Gastrocnemius medialis (tissue), 4 donors: ENCODE measurements at regions of chr11 and their contacts with region 1.

Region 1: DNA sequence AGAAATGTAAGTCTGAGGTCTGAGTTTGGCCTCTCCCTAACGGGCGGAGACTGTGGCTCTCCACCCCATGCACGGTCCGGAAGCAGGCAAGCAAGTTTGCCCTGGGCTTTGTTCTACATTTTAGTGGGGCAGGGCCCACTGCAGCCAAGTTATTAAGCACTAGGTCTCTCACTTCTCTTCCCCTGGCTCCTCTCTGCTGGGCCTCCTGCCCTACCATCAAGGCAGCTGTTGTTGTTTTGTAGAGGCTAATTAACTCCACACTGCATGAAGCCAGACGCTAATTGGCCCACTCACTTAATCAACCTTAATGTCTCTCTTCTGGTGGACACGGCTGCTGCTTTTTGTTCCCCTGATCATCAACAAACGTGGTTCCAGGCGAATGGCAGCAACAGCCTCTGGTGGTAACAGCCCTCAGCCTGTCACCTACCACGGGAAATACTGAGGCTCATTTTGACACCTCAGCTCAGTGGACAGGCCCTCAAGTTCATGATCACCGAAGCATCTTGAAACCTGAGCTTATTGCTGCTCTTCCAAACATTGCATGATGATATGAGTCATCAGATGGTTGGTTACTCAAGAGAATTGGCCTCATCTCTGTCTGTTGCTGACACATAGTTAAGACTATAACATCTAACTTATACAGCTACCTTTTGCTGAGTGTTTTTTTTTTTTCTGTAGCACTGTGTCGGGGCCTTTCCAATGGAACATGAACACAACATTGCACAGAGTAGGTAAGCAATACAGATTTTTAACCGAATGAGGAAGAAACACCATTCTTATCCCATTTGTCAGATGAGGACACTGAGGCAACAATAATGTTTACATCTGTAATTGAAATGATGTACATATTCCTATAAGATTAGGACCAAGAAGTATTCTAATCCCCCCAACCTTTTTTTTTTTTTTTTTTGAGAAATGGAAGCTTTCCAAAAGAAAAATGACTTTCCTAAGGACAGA is 20.8 kb upstream of the LMO2 start:
- DNase-seq: peak; percentile 53 to 71
- ATAC-seq: peak; percentile 100
- H3K4me3 ChIP-seq: no peak overlapping the region
- H3K27ac ChIP-seq: peak overlapping the region; percentile 44 to 78 (median 76)
- H3K4me1 ChIP-seq: peaks cover 0 to 13% of the 10 kb centered on the region in 2 donors
- H3K27me3 ChIP-seq: no peaks in the 10 kb centered on the region
- CTCF ChIP-seq: no peak
- POLR2A ChIP-seq: no peak

Region 2: DNA sequence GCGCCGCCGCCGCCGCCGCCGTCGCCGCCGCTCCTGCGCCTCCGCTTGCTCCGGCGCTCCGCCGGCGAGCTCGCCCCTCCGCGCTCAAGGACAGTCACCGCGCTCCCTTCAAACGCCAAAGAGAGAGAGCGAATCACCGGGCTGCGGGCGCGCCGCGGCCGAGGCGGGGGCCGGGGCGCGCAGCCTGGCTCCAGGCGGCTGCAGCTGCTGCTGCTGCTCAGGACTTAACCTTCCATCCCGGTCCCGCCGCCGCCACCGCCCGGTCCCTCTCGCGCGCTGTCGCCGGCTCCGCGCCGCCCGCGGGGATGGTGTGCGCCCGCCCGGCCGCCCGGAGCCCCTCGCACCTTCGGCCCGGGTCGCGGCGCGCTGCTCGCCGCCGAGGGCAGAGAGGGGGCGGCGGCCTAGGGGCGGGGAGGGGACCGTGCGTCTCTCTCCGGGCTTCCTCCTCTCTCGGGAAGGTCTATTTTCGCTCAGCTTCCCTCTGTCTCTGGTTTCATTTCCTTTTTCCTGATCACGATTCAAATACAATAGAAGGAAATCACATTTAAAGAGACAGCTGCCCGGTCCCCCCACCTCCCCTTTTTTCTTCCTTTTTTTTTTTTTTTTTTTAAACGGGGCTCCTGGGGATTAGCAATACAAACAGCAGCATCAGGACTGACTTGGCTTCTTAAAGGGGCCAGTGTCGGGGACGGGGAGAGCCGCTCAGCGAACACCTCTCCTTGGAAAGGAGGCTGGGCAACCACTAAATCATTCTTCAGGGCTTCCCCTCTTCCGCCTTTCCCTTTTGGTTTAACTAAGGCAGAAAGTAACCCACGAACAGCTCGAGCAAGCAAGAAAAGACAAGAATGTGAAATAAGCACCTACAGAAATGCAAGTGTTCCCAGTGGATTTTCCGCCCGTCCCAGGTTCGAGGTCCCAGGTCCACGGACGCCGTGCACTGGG is 42.9 kb before region 1 on chr11:
- in situ Hi-C with region 1: loop called in 1 of 4 experiments (anchors 10 kb)
- intact Hi-C with region 1: loop called (anchors 2 kb)
- DNase-seq: peak; percentile 31 to 72
- ATAC-seq: peak; percentile 84 to 86
- H3K4me3 ChIP-seq: peak overlapping the region; percentile 66 to 85 (median 76)
- H3K27ac ChIP-seq: peak overlapping the region; percentile 52 to 82 (median 74)
- H3K4me1 ChIP-seq: peaks cover 10 to 12% of the 10 kb centered on the region in 2 donors
- H3K27me3 ChIP-seq: no peaks in the 10 kb centered on the region
- CTCF ChIP-seq: no peak
- POLR2A ChIP-seq: no peak

Region 3: GRCh38 chr11:33899383-33900037 is 13.2 kb before region 1 on chr11:
- in situ Hi-C with region 1: no loop called
- intact Hi-C with region 1: loop called (anchors 1 kb)
- DNase-seq: peak; percentile 74 to 88
- ATAC-seq: peak; percentile 94 to 98
- H3K4me3 ChIP-seq: no peak overlapping the region
- H3K27ac ChIP-seq: peak overlapping the region; percentile 40 to 75 (median 56)
- H3K4me1 ChIP-seq: peaks cover 11 to 19% of the 10 kb centered on the region in 2 donors
- H3K27me3 ChIP-seq: no peaks in the 10 kb centered on the region
- CTCF ChIP-seq: no peak
- POLR2A ChIP-seq: no peak